Right cardiac atrium (tissue), 5 donors: ENCODE measurements at regions of chr1 and their contacts with region 1.

Region 1: GRCh38 chr1:247331172-247331991 is at the start of gene ZNF496:
- DNase-seq: peak; percentile 86 to 94 (median 92)
- ATAC-seq: peak; percentile 83
- H3K4me3 ChIP-seq: peak within 1 kb of the TSS; percentile 94
- H3K27ac ChIP-seq: peak within 1 kb of the TSS; percentile 89
- H3K4me1 ChIP-seq: peaks cover 13% of the 10 kb centered on the region
- H3K27me3 ChIP-seq: no peaks in the 10 kb centered on the region
- total RNA-seq, gene ZNF496: 16.9 to 19.5 (median 17.4) TPM

Region 2: DNA sequence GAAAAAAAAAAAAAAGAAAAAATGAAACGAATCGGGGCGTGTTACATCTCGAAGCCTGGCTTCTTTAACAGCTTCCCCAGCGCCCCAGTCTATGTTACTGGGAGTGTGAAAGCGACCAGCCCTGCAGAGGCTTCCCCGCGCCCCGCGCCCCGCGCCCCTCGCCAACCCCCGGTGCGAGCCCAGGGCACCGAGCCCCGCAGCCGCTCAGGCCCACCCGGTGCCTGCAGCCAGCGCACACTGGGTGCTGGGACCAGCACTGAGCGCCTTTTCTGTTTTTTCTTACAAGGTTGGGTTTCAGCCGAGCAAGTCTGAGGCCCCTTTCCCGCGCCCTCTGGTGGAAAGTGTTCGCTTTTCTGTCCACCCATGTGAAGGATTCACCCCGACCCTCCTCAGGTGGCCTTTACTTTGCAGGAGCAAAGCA is 42.3 kb after region 1 on chr1:
- intact Hi-C with region 1: loop called in 1 of 4 experiments (anchors 5 kb)
- DNase-seq: peak; percentile 57 to 81 (median 80)
- ATAC-seq: peak; percentile 81
- H3K4me3 ChIP-seq: peak overlapping the region; percentile 65
- H3K27ac ChIP-seq: no peak overlapping the region
- H3K4me1 ChIP-seq: no peaks in the 10 kb centered on the region
- H3K27me3 ChIP-seq: no peaks in the 10 kb centered on the region